ENCODE measurements at regions of chr9 and their contacts with region 1.

Region 1: DNA sequence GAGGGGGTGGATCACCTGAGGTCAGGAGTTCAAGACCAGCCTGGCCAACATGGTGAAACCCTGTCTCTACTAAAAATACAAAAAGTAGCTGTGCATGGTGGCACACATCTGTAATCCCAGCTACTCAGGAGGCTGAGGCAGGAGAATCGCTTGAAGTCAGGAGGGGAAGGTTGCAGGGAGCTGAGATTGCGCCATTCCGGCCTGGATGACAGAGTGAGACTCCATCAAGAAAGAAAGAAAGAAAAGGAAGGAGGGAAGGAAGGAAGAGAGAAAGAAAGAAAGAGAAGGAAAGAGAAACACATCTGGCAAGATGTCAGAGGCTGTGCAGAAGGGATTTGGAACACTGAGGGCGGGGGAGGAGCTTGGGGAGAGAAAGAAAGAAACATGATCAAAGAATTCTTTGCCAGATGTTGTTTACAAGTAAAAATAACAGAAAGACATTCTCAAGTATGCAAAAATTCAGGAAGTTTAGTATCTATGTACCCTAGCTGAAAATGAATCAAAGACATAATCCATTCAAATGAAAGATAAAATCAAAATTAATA is 93.7 kb downstream of the AK8 start:
- DNase-seq: no peak
- CTCF ChIP-seq: no peak

Region 2: GRCh38 chr9:132768932-132769905 is 15.1 kb before region 1 on chr9:
- CTCF ChIA-PET with region 1: interaction called, 14 read pairs
- POLR2A ChIA-PET with region 1: interaction called, 3 read pairs
- DNase-seq: peak; percentile 74
- CTCF ChIP-seq: peak; percentile 39